Activated CD4-positive, alpha-beta T cell treated with anti-CD3 and anti-CD28 coated beads, Interleukin-2, amount 10 ng/mL, durations not matched to agents 7 days and 5 days (primary cell): ENCODE measurements at regions of chr2 and their contacts with region 1.

Region 1: GRCh38 chr2:96554293-96555145 is 18.0 kb downstream of the ARID5A start:
- DNase-seq: peak; percentile 70
- H3K4me3 Mint-ChIP-seq: no peak overlapping the region
- H3K27ac Mint-ChIP-seq: peak overlapping the region; percentile 62
- H3K4me1 Mint-ChIP-seq: peaks cover 28% of the 10 kb centered on the region
- H3K27me3 Mint-ChIP-seq: no peaks in the 10 kb centered on the region

Region 2: DNA sequence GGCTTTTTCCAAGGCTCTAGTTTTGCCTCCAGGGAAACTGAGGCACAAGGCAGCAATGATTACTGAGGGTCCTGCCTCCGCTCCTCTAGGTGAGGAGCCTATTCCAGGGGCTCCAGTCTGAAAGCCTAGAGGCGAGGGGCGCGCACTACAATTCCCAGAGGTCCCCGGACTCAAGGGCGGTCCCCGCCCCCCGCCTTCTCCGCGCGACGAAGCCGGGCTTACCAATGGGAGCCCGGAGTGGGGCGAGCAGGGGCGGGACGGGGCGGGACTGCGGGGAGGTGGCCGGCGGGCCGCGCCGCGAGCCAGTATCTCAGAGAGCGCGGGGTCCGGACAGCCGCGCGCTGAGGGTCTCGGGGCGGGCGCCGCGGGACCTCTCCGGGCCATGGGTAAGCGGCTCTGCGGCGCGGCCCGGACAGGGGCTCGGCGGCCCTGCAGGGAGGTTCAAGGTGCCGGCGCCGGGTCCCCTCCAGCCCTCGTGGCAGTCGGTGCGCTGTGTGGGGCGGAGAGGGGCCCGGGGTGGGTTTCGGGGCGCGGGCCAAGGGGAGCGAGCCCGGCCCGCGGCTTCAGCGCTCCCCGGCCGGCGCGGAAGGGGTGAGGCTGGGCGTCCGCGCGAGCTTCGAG is 18.0 kb before region 1 on chr2 and contains the start of gene ARID5A:
- CTCF ChIA-PET with region 1: interaction called, 21 read pairs
- POLR2A ChIA-PET with region 1: interaction called, 4 read pairs
- DNase-seq: peak; percentile 94
- H3K4me3 Mint-ChIP-seq: peak within 1 kb of the TSS; percentile 88
- H3K27ac Mint-ChIP-seq: peak within 1 kb of the TSS; percentile 98
- H3K4me1 Mint-ChIP-seq: peaks cover 63% of the 10 kb centered on the region
- H3K27me3 Mint-ChIP-seq: no peaks in the 10 kb centered on the region
- total RNA-seq, gene ARID5A: 47.2 to 50.5 TPM

Region 3: GRCh38 chr2:96574364-96574763 is 19.8 kb after region 1 on chr2:
- CTCF ChIA-PET with region 1: interaction called, 10 read pairs
- POLR2A ChIA-PET with region 1: no interaction called
- DNase-seq: no peak
- H3K4me3 Mint-ChIP-seq: no peak overlapping the region
- H3K27ac Mint-ChIP-seq: no peak overlapping the region
- H3K4me1 Mint-ChIP-seq: no peaks in the 10 kb centered on the region
- H3K27me3 Mint-ChIP-seq: no peaks in the 10 kb centered on the region